B cell (primary cell): ENCODE measurements at regions of chr19 and their contacts with region 1.

Region 1: DNA sequence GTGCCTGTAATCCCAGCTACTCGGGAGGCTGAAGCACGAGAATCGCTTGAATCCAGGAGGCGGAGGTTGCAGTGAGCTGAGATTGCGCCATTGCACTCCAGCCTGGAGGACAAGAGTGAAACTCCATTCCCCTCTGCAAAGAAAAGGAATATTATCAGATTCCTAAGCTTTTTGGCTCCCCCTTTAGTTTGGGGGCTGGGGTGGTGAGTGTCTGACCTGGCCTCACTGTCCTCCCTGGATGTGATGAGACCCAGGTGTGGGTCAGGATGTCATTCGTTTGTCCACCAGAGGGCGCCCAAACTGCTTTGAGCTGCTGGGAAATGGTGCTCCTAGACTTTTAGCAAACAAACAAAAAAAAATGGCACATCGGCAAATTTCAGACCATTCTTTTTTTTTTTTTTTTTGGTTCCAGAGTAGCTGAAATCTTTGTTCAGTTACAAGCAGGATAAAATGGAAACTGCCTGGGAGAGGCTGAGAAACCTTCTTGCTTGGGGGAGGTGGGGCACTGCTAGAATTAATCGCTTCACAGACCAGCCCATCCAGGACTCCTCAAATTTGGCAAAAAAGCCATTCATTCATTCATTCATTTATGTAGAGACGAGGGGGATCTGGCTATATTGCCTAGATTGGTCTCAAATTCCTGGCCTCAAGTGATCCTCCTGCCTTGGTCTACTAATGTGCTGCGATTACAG is 29.4 kb downstream of the SPC24 start:
- DNase-seq: peak; percentile 83
- ATAC-seq: peak; percentile 62
- H3K4me3 ChIP-seq: no peak overlapping the region
- H3K4me3 Mint-ChIP-seq: no peak overlapping the region
- H3K27ac ChIP-seq: no peak overlapping the region
- H3K27ac Mint-ChIP-seq: no peak overlapping the region
- H3K4me1 ChIP-seq: peaks cover 0 to 5% of the 10 kb centered on the region in 2 donors
- H3K4me1 Mint-ChIP-seq: peaks cover 7% of the 10 kb centered on the region
- H3K27me3 ChIP-seq: no peaks in the 10 kb centered on the region
- H3K27me3 Mint-ChIP-seq: no peaks in the 10 kb centered on the region
- CTCF ChIP-seq: peak; percentile 90

Region 2: DNA sequence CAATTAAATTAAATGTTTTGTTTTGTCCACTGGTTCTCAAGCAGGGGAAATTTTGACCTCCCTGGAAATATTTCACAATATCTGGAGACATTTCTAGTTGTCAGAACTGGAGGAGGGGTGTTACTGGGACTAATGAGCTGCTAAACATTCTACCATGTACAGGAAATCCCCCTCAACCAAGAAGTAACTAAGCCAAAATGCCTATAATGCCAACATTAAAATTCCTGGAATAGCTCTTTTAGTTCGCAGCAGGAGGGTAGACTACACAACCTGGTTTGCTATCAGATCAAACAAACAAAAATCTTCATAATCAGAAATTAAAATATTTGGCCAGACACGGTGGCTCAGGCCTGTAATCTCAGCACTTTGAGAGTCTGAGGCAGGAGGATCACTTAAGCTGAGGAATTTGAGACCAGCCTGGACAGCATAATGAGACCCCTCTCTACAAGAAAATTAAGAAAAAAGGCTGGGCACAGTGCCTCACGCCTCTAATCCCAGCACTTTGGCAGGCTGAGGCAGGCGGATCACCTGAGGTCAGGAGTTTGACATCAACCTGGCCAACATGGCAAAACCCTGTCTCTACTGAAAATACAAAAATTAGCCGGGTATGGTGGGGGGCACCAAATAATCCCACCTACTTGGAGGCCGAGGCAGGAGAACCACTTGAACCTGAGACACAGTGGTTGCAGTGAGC is 179.0 kb before region 1 on chr19:
- CTCF ChIA-PET with region 1: interaction called, 10 read pairs
- POLR2A ChIA-PET with region 1: no interaction called
- intact Hi-C with region 1: loop called (anchors 1 kb)
- DNase-seq: no peak
- ATAC-seq: no peak
- H3K4me3 ChIP-seq: no peak overlapping the region
- H3K4me3 Mint-ChIP-seq: no peak overlapping the region
- H3K27ac ChIP-seq: no peak overlapping the region
- H3K27ac Mint-ChIP-seq: no peak overlapping the region
- H3K4me1 ChIP-seq: no peaks in the 10 kb centered on the region
- H3K4me1 Mint-ChIP-seq: peaks cover 3% of the 10 kb centered on the region
- H3K27me3 ChIP-seq: no peaks in the 10 kb centered on the region
- H3K27me3 Mint-ChIP-seq: no peaks in the 10 kb centered on the region
- CTCF ChIP-seq: no peak

Region 3: GRCh38 chr19:11044436-11044835 is 81.7 kb before region 1 on chr19:
- CTCF ChIA-PET with region 1: interaction called, 19 read pairs
- POLR2A ChIA-PET with region 1: no interaction called
- intact Hi-C with region 1: no loop called
- DNase-seq: no peak
- ATAC-seq: no peak
- H3K4me3 ChIP-seq: no peak overlapping the region
- H3K4me3 Mint-ChIP-seq: no peak overlapping the region
- H3K27ac ChIP-seq: no peak overlapping the region
- H3K27ac Mint-ChIP-seq: no peak overlapping the region
- H3K4me1 ChIP-seq: peaks cover 30 to 43% of the 10 kb centered on the region in 2 donors
- H3K4me1 Mint-ChIP-seq: peaks cover 29% of the 10 kb centered on the region
- H3K27me3 ChIP-seq: peaks cover 0 to 23% (median 6%) of the 10 kb centered on the region in 4 experiments
- H3K27me3 Mint-ChIP-seq: peaks cover 18% of the 10 kb centered on the region
- CTCF ChIP-seq: no peak

Region 4: DNA sequence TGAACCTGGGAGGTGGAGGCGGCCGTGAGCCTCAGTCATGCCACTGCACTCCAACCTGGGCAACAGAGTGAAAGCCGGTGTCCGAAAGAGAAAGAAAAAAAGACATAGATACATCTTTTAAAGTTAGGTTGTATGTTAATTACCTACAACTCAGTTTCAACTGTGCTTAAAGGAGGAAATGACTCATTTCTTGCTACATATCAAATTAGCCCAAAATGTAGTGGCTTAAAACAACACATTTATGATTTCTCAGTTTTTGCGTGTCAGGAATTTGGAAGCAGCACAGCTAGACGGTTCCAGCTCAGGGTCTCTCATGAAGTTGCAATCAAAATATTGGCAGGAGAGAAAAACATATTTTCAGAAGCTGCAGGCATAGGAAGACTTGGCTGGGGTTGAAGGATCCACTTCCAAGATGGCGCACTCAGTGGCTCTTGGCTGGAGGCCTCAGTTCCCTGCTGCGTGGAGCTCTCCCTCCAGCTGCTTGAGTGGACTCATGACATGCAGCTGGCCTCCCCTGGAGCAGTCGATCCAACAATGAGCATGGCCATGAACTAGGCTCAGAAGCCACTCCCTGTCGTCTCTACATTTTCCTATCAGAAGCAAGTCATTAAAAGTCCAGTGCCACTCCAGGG is 29.8 kb before region 1 on chr19:
- CTCF ChIA-PET with region 1: interaction called, 14 read pairs
- POLR2A ChIA-PET with region 1: no interaction called
- intact Hi-C with region 1: loop called (anchors 2 kb)
- DNase-seq: peak; percentile 41
- ATAC-seq: peak; percentile 22
- H3K4me3 ChIP-seq: no peak overlapping the region
- H3K4me3 Mint-ChIP-seq: peak overlapping the region; percentile 12
- H3K27ac ChIP-seq: no peak overlapping the region
- H3K27ac Mint-ChIP-seq: no peak overlapping the region
- H3K4me1 ChIP-seq: peaks cover 41 to 52% of the 10 kb centered on the region in 2 donors
- H3K4me1 Mint-ChIP-seq: peaks cover 30% of the 10 kb centered on the region
- H3K27me3 ChIP-seq: peaks cover 0 to 44% (median 13%) of the 10 kb centered on the region in 4 experiments
- H3K27me3 Mint-ChIP-seq: peaks cover 19% of the 10 kb centered on the region
- CTCF ChIP-seq: no peak

Region 5: GRCh38 chr19:11482384-11483050 is 356.4 kb after region 1 on chr19:
- CTCF ChIA-PET with region 1: interaction called, 11 read pairs
- POLR2A ChIA-PET with region 1: no interaction called
- intact Hi-C with region 1: no loop called
- DNase-seq: peak; percentile 93
- ATAC-seq: peak; percentile 79
- H3K4me3 ChIP-seq: peak overlapping the region in 4 of 5 experiments; percentile 20 to 48 (median 30)
- H3K4me3 Mint-ChIP-seq: peak overlapping the region; percentile 80
- H3K27ac ChIP-seq: no peak overlapping the region
- H3K27ac Mint-ChIP-seq: peak overlapping the region; percentile 80
- H3K4me1 ChIP-seq: peaks cover 37 to 42% of the 10 kb centered on the region in 2 donors
- H3K4me1 Mint-ChIP-seq: peaks cover 27% of the 10 kb centered on the region
- H3K27me3 ChIP-seq: peaks cover 0 to 46% (median 25%) of the 10 kb centered on the region in 4 experiments
- H3K27me3 Mint-ChIP-seq: peaks cover 34% of the 10 kb centered on the region
- CTCF ChIP-seq: peak; percentile 93